Activated T-helper 2 cell treated with anti-CD3 and anti-CD28 coated beads, Interferon-gamma antibody, Interleukin-2, Interleukin-4, amounts not matched to agents 10 μg/mL and 5 μg/mL and 100 μg/mL, durations not matched to agents 14 hours and 24 hours and 36 hours (primary cell): ENCODE measurements at regions of chr2 and their contacts with region 1.

Region 1: DNA sequence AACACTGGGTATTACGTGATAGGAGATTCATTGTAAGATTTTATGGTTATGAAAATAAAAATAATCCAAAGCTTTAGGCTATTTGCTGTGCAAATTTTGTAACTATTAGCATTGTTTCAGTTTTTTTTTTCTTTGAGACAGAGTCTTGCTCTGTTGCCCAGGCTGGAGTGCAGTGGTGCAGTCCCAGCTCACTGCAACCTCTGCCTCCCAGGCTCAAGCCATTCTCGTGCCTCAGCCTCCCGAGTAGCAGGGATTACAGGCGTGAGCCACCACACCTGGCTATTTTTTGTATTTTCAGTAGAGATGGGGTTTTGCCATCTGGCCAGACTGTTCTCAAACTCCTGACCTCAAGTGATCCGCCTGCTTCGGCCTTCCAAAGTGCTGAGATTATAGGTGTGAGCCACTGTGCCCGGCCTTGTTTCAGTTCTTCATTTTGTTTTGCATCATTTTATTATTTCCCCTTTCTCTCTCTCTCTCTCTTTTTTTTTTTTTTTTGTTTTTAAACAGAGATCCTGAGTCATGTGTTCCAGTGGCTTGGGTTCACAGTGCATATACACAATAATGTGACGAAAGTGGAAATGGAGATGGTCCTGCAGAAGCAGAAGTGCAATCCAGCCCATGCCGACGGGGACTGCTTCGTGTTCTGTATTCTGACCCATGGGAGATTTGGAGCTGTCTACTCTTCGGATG is 25.8 kb downstream of the CASP10 start:
- DNase-seq: no peak
- H3K4me3 Mint-ChIP-seq: no peak overlapping the region
- H3K27ac Mint-ChIP-seq: no peak overlapping the region
- H3K4me1 Mint-ChIP-seq: peaks cover 16% of the 10 kb centered on the region
- H3K27me3 Mint-ChIP-seq: no peaks in the 10 kb centered on the region

Region 2: GRCh38 chr2:201194097-201194496 is 14.6 kb before region 1 on chr2:
- intact Hi-C with region 1: loop called (anchors 1 kb)
- DNase-seq: no peak
- H3K4me3 Mint-ChIP-seq: peak overlapping the region; percentile 20
- H3K27ac Mint-ChIP-seq: peak overlapping the region; percentile 62
- H3K4me1 Mint-ChIP-seq: peaks cover 42% of the 10 kb centered on the region
- H3K27me3 Mint-ChIP-seq: no peaks in the 10 kb centered on the region

Region 3: DNA sequence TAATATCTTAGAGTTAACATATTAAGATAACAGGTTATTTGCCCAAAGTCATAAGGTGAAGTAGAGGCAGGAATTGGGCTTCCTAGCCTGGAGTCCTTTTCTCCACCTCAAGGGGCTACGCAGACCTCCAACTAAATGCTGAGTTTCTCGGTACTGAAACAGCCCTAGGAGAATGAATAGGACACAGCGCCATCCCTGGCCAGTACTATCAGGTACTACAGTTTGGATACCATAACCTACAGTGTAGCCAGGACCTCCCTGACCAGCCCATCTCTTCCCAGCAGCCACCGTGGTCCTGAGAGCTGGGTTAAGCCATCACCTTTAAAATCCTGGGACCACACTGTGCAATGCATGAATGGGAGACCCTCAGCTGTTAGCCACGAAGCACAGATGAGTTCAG is 67.3 kb after region 1 on chr2:
- intact Hi-C with region 1: no loop called
- DNase-seq: no peak
- H3K4me3 Mint-ChIP-seq: no peak overlapping the region
- H3K27ac Mint-ChIP-seq: no peak overlapping the region
- H3K4me1 Mint-ChIP-seq: peaks cover 32% of the 10 kb centered on the region
- H3K27me3 Mint-ChIP-seq: no peaks in the 10 kb centered on the region